A549 (cell line): ENCODE measurements at regions of chr7 and their contacts with region 1.

Region 1: DNA sequence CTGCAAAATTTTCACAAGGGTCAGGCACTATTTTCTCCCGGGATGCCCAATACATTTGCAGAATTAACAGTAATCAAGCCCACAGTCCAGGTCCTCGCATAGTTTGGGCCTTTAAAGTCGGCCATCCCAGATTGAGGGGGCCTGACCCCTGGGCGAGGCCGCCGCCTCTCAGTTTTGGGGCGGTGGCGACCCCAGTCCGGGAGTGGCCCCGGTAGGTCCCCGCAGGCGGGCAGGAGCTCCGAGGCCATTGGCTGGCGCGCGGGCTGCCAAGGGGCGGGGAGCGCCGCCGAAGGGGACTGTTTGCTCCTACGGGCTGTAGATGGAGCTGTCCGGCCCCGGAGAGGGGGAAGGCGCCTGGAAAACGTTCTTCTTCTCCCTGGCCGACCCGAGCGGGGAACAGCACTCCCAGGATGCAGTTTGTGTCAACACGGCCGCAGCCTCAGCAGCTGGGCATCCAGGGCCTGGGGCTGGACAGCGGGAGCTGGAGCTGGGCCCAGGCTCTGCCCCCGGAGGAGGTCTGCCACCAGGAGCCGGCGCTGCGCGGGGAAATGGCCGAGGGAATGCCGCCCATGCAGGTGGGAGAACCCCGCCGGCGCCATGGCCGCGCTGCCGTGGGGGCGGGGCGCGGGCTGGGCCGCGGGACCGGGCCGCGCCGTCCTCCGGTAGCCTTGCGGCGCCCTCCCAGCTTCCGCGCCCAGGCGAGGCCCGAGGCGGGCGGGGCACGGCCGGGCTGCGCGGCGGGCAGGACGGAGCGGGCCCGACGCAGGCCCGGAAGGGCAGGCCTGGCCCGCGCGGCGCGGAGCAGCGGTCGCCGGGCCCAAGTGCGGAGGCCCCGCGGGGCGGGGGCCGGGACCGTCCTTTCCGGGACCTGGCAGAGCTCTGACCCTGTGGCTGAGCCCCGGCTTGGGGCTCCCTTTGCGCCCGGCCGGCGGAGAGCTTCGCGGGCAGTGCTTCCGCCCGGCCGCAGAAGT is at the start of gene ZNF282:
- DNase-seq: peak; percentile 92 to 96
- ATAC-seq: peak; percentile 98 to 99
- H3K4me3 ChIP-seq: peak within 1 kb of the TSS; percentile 77
- H3K27ac ChIP-seq: peak within 1 kb of the TSS; percentile 93 to 94
- H3K4me1 ChIP-seq: peaks cover 14% of the 10 kb centered on the region; the same call in 1 of the 3 replicates
- CTCF ChIP-seq: peak; percentile 71
- EP300 ChIP-seq: no peak
- POLR2A ChIP-seq: peak; percentile 57
- RAD21 ChIP-seq: peak; percentile 41 to 53; a peak in 4 of 5 replicates
- polyA plus RNA-seq, gene ZNF282: 8.8 and 11.9 TPM in 2 replicates

Region 2: GRCh38 chr7:149180722-149181449 is 14.6 kb before region 1 on chr7:
- CTCF ChIA-PET with region 1: interaction called, 5 read pairs
- POLR2A ChIA-PET with region 1: interaction called, 10 read pairs
- DNase-seq: no peak
- ATAC-seq: no peak
- H3K4me3 ChIP-seq: no peak overlapping the region
- H3K27ac ChIP-seq: no peak overlapping the region
- H3K4me1 ChIP-seq: no peaks in the 10 kb centered on the region
- CTCF ChIP-seq: no peak
- EP300 ChIP-seq: no peak
- POLR2A ChIP-seq: no peak
- RAD21 ChIP-seq: no peak

Region 3: DNA sequence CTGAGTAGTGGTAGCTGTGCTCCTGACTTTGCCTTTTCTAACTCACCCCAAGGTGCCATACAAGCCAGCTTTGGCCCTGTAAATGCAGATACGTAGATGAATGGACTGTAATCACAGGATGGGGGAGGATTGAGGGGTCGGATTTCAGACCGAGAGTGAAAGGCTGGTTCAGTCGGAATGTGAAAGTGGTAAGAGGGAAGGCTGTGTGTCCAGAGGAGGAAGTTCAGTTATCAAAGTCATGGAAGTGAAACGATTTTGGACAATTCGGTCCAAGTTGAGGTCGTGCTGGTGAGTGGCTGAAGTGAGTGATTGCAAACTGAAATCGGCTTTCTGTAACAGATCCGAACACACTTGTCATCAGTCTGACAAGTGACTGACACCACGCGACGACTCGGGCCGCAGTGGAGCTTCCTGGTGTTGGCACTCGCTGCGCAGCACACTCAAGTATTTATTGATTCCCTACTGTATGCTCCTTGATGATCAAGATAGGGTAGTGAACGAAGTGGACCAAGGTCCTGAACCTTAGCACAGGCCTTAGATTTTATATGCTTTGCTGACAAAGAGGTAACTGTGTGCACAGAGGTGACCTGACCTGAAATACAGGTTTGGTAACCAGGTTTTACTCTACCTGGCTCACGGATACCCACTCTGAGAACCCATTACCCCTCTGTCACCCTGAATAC is 10.4 kb after region 1 on chr7:
- CTCF ChIA-PET with region 1: interaction called, 21 read pairs
- POLR2A ChIA-PET with region 1: no interaction called
- DNase-seq: no peak
- ATAC-seq: no peak
- H3K4me3 ChIP-seq: no peak overlapping the region
- H3K27ac ChIP-seq: no peak overlapping the region
- H3K4me1 ChIP-seq: peaks cover 6% of the 10 kb centered on the region; the same call in 1 of the 3 replicates
- CTCF ChIP-seq: no peak
- EP300 ChIP-seq: no peak
- POLR2A ChIP-seq: no peak
- RAD21 ChIP-seq: no peak

Region 4: DNA sequence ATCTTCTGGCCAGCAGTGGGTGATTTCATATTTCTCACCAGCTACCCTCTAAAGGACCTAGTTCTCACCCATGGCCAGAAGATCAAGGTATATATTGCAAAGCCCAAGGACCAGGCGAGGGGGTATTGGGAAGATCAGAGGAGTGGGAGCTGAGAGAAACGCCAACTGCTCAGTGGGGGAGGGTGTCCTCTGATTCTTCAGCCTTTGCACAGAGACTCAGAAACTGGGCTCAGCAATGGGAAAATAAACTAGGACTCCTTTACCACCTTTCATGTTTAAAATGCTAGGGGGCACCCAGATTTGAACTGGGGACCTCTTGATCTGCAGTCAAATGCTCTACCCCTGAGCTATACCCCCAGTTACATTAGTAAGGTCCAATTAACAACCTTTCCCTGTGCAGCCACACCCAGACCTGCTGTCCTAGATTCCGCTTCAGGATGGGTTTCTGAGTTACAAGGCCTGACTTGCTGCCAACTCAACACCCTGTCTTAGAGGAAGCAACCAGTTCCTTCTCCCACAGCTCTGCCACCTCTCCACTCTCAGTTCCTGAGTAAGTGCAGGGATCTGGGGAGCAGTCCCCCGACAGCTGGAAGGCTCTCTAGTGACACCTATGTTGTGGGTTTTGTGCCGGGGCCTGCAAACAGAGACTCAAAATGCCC is 160.1 kb after region 1 on chr7:
- CTCF ChIA-PET with region 1: no interaction called
- POLR2A ChIA-PET with region 1: no interaction called
- DNase-seq: peak; percentile 40 to 73
- ATAC-seq: peak; percentile 92
- H3K4me3 ChIP-seq: no peak overlapping the region
- H3K27ac ChIP-seq: no peak overlapping the region
- H3K4me1 ChIP-seq: no peaks in the 10 kb centered on the region
- CTCF ChIP-seq: 0 out of 3 replicates have a peak, but pooled peaks have one; percentile 8
- EP300 ChIP-seq: no peak
- POLR2A ChIP-seq: no peak
- RAD21 ChIP-seq: peak in 1 of 2 experiments; percentile 19; a peak in 1 of 5 replicates

Region 5: GRCh38 chr7:149474309-149475114 is 279.0 kb after region 1 on chr7:
- CTCF ChIA-PET with region 1: no interaction called
- POLR2A ChIA-PET with region 1: no interaction called
- DNase-seq: no peak
- ATAC-seq: no peak
- H3K4me3 ChIP-seq: no peak overlapping the region
- H3K27ac ChIP-seq: no peak overlapping the region
- H3K4me1 ChIP-seq: no peaks in the 10 kb centered on the region
- CTCF ChIP-seq: no peak
- EP300 ChIP-seq: no peak
- POLR2A ChIP-seq: no peak
- RAD21 ChIP-seq: no peak

Region 6: GRCh38 chr7:149662591-149663095 is 467.2 kb after region 1 on chr7:
- CTCF ChIA-PET with region 1: no interaction called
- POLR2A ChIA-PET with region 1: no interaction called
- DNase-seq: peak; percentile 33 to 83
- ATAC-seq: peak; percentile 96 to 99
- H3K4me3 ChIP-seq: no peak overlapping the region
- H3K27ac ChIP-seq: no peak overlapping the region
- H3K4me1 ChIP-seq: 0 out of 3 replicates have a peak, but pooled peaks cover 2% of the 10 kb centered on the region
- CTCF ChIP-seq: peak; percentile 53
- EP300 ChIP-seq: no peak
- POLR2A ChIP-seq: no peak
- RAD21 ChIP-seq: peak; percentile 64 to 79